ENCODE measurements at regions of chr7 and their contacts with region 1.

Region 1: GRCh38 chr7:139431010-139431409 is 52.5 kb downstream of the KLRG2 start:
- DNase-seq: no peak
- ATAC-seq: no peak
- H3K4me3 ChIP-seq: no peak overlapping the region
- H3K27ac ChIP-seq: no peak overlapping the region
- H3K4me1 ChIP-seq: no peaks in the 10 kb centered on the region
- CTCF ChIP-seq: no peak
- EP300 ChIP-seq: no peak
- POLR2A ChIP-seq: no peak
- RAD21 ChIP-seq: no peak

Region 2: GRCh38 chr7:139071680-139072079 is 359.3 kb before region 1 on chr7:
- CTCF ChIA-PET with region 1: no interaction called
- POLR2A ChIA-PET with region 1: no interaction called
- DNase-seq: no peak
- ATAC-seq: no peak
- H3K4me3 ChIP-seq: no peak overlapping the region
- H3K27ac ChIP-seq: no peak overlapping the region
- H3K4me1 ChIP-seq: peaks cover 7% of the 10 kb centered on the region; the same call in 1 of the 3 replicates
- CTCF ChIP-seq: no peak
- EP300 ChIP-seq: no peak
- POLR2A ChIP-seq: no peak
- RAD21 ChIP-seq: no peak

Region 3: DNA sequence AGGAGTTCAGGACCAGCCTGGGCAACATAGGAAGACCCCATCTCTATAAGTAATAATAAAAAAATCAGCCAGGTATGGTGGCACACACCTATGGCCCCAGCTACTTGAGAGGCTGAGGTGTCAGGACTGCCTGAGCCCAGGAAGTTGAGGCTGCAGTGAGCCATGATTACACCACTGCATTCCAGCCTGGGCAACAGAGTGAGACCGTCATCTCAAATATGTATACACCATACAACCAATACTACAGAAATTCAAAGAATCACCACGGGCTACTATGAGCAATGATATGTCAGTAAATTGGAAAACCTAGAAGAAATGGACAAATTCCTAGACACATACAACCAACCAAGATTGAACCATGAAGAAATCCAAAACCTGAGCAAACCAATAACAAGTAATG is 261.2 kb before region 1 on chr7:
- CTCF ChIA-PET with region 1: no interaction called
- POLR2A ChIA-PET with region 1: no interaction called
- DNase-seq: no peak
- ATAC-seq: no peak
- H3K4me3 ChIP-seq: no peak overlapping the region
- H3K27ac ChIP-seq: no peak overlapping the region
- H3K4me1 ChIP-seq: no peaks in the 10 kb centered on the region
- CTCF ChIP-seq: no peak
- EP300 ChIP-seq: no peak
- POLR2A ChIP-seq: no peak
- RAD21 ChIP-seq: no peak

Region 4: DNA sequence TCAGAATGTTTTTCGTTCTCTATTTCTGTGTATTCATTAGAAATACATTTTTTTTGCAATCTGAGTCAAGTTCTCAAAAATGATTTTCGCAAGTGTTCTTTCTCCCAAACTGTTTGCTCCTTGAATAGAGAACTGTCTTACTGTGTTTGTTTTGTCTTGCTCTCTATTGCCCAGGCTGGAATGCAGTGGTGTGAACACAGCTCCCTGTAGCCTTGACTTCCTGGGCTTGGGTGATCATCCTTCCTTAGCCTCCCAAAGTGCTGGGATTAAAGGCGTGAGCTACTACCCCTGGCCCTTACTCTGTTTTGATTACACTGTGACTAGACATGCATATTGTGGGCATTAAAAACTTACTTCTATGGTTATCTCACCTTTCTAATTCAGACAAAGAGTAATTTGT is 14.6 kb before region 1 on chr7:
- CTCF ChIA-PET with region 1: interaction called, 63 read pairs
- POLR2A ChIA-PET with region 1: no interaction called
- DNase-seq: no peak
- ATAC-seq: no peak
- H3K4me3 ChIP-seq: no peak overlapping the region
- H3K27ac ChIP-seq: no peak overlapping the region
- H3K4me1 ChIP-seq: no peaks in the 10 kb centered on the region
- CTCF ChIP-seq: no peak
- EP300 ChIP-seq: no peak
- POLR2A ChIP-seq: no peak
- RAD21 ChIP-seq: no peak

Region 5: DNA sequence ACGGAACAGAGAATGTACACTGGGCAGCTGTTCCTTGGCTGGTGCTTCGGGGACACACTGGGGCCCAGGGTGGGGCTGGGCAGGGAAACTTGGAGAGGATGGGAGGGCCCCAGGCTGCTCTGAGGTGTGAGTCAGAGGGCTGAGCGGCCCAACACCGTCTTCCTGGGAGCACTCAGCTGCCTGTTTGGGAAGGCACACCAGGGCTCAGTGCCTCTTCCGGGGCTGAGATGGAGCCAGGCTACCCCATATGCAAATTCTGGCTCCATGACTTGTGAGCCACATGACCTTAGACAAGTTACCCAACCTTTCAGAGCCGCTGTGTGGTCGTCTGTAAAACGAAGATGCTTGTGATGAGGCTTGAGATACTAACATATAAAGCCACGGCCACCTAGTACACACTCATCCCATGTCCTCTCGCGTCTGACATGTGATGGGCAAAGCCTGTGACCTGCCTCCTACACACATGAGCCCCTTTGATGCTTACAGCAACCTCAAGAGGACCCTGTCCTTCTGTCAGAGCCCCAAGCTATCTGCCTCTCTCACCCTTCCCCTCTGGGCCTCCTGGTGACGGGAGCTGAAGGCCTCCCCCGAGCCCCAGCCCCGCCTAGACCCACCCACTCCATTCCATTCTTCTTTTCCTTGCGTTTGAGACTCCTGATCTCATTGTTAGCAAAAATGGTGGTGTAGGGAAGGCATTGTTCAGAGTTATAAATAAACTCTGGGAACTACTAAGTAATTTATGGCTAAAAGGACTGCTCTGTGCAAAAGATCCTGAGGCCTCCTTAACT is 26.3 kb after region 1 on chr7:
- CTCF ChIA-PET with region 1: interaction called, 25 read pairs
- POLR2A ChIA-PET with region 1: no interaction called
- DNase-seq: peak in 1 of 2 experiments; percentile 14
- ATAC-seq: peak; percentile 69; a peak in 5 of 6 replicates
- H3K4me3 ChIP-seq: no peak overlapping the region
- H3K27ac ChIP-seq: 0 out of 6 replicates have a peak overlapping the region, but pooled peaks of 1 of the 2 experiments have one; percentile 4
- H3K4me1 ChIP-seq: peaks cover 6% of the 10 kb centered on the region; the same call in 1 of the 3 replicates
- CTCF ChIP-seq: no peak
- EP300 ChIP-seq: no peak
- POLR2A ChIP-seq: no peak
- RAD21 ChIP-seq: no peak

Region 6: GRCh38 chr7:139482662-139483469 is 51.9 kb after region 1 on chr7:
- CTCF ChIA-PET with region 1: interaction called, 19 read pairs
- POLR2A ChIA-PET with region 1: no interaction called
- DNase-seq: peak in 1 of 2 experiments; percentile 37
- ATAC-seq: peak; percentile 76 to 78
- H3K4me3 ChIP-seq: peak overlapping the region; percentile 51
- H3K27ac ChIP-seq: peak overlapping the region; percentile 37 to 73; a peak in 5 of 6 replicates
- H3K4me1 ChIP-seq: peaks cover 8% of the 10 kb centered on the region; the same call in 1 of the 3 replicates
- CTCF ChIP-seq: no peak
- EP300 ChIP-seq: no peak
- POLR2A ChIP-seq: no peak
- RAD21 ChIP-seq: no peak

Region 7: DNA sequence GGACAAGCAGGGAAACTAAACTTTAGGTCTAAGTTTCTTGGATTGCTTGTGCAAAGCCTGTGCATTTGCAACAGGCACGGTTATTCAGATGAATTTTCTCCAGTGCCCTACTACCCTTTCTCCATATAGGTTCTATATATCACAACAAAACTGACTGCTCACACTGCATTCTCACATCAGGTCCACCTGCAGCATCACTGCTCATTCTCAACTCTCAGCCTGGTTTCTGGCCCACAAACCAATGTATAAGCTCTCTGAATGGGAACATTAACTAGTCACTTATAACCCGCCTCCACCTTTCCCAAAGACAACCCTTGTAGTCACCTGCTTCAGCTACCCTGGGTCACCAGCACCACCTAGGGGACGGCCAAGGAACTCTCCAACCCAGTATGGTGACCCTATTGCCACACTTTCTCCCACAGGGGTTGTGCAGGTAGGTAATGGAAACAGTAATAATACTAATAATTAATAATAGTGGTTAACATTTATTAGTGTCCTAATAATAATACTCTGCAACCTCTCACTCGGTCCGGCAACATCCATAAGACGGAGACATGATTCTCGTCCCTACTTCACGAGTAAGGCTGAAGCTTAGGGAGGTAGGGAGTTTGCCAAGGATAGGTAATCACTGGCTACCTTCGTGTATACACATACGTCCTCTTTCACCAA is 189.8 kb after region 1 on chr7:
- CTCF ChIA-PET with region 1: interaction called, 17 read pairs
- POLR2A ChIA-PET with region 1: no interaction called
- DNase-seq: peak; percentile 48 to 65
- ATAC-seq: peak; percentile 76 to 90
- H3K4me3 ChIP-seq: no peak overlapping the region
- H3K27ac ChIP-seq: no peak overlapping the region
- H3K4me1 ChIP-seq: peaks cover 7% of the 10 kb centered on the region; the same call in 1 of the 3 replicates
- CTCF ChIP-seq: peak; percentile 60
- EP300 ChIP-seq: no peak
- POLR2A ChIP-seq: no peak
- RAD21 ChIP-seq: peak; percentile 58 to 66

Region 8: GRCh38 chr7:139767561-139767982 is 336.6 kb after region 1 on chr7:
- CTCF ChIA-PET with region 1: no interaction called
- POLR2A ChIA-PET with region 1: no interaction called
- DNase-seq: no peak
- ATAC-seq: no peak
- H3K4me3 ChIP-seq: no peak overlapping the region
- H3K27ac ChIP-seq: peak overlapping the region in 1 of 2 experiments; percentile 6; a peak in 1 of 6 replicates
- H3K4me1 ChIP-seq: peaks cover 32% of the 10 kb centered on the region
- CTCF ChIP-seq: no peak
- EP300 ChIP-seq: no peak
- POLR2A ChIP-seq: no peak
- RAD21 ChIP-seq: no peak

Measured in A549 (cell line).